Dendritic cell treated with granulocyte-macrophage colony-stimulating factor and Interleukin-4, amounts not matched to agents 40 ng/mL and 50 ng/mL, for 4 days (primary cell): ENCODE measurements at regions of chr2 and their contacts with region 1.

Region 1: GRCh38 chr2:85595301-85596025 is at the start of gene RNF181:
- H3K4me3 Mint-ChIP-seq: peak within 1 kb of the TSS; percentile 95
- H3K27ac Mint-ChIP-seq: peak within 1 kb of the TSS; percentile 97
- H3K4me1 Mint-ChIP-seq: peaks cover 83% of the 10 kb centered on the region
- H3K27me3 Mint-ChIP-seq: no peaks in the 10 kb centered on the region

Region 2: GRCh38 chr2:85409845-85410583 is 185.4 kb before region 1 on chr2 and contains the start of gene CAPG:
- intact Hi-C with region 1: loop called (anchors 5 kb)
- H3K4me3 Mint-ChIP-seq: peak within 1 kb of the TSS; percentile 88
- H3K27ac Mint-ChIP-seq: peak within 1 kb of the TSS; percentile 92
- H3K4me1 Mint-ChIP-seq: peaks cover 95% of the 10 kb centered on the region
- H3K27me3 Mint-ChIP-seq: no peaks in the 10 kb centered on the region

Region 3: DNA sequence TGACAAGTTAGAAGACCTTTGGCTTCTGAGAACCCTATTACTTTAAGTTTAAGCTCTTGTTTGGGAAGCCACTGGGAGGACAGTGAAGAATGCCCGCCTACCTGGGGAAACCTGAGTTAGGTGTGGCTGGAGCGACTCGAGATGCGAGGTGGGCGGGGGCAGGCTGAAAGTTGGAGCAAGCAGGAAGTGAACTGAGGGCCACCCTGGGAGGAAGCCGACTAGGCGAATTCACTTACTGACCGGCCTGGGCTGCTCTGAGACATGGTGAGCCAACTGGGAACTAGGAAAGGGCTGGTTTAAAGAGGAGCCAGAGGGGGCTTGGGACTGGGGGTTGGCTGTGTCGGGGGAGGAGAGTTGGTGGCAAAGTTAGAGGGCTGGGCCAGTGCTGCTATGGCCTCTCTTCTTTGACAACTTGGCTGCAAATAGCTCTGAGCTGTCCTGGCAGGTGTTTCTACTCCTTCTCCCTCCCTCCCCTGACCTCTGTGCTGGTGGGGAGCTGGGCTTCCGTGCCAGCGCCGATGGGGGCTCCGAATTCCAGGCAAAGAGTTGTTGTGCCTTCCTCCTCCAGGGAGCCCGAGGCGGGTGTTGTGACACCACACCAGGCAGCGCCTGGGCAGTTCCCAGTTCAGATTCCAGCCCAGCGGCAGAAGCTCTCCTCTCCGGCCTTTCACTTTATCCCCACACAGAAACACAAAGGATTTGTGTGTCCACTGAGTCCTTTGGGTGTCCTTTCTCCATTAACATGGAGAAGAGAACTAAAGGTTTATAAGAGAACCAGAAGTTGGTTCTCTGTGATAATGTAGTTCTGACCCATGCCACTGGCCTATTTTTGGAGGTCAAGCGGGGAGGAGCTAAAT is 17.8 kb before region 1 on chr2 and contains the start of gene VAMP8:
- intact Hi-C with region 1: loop called (anchors 2 kb)
- H3K4me3 Mint-ChIP-seq: peak within 1 kb of the TSS; percentile 97
- H3K27ac Mint-ChIP-seq: peak within 1 kb of the TSS; percentile 99
- H3K4me1 Mint-ChIP-seq: peaks cover 52% of the 10 kb centered on the region
- H3K27me3 Mint-ChIP-seq: no peaks in the 10 kb centered on the region